HepG2 (cell line): ENCODE measurements at regions of chr2 and their contacts with region 1.

Region 1: GRCh38 chr2:28392297-28393113 is at the start of gene FOSL2:
- DNase-seq: peak; percentile 100
- ATAC-seq: peak; percentile 85
- H3K4me3 ChIP-seq: peak within 1 kb of the TSS; percentile 91 to 95 (median 93)
- H3K27ac ChIP-seq: peak within 1 kb of the TSS; percentile 88
- H3K4me1 ChIP-seq: peaks cover 45% of the 10 kb centered on the region
- H3K27me3 ChIP-seq: peaks cover 1 to 20% of the 10 kb centered on the region in 2 experiments; a peak in 3 of 5 replicates
- CTCF ChIP-seq: peak; percentile 36
- EP300 ChIP-seq: peak; percentile 46 to 55; a peak in 2 of 4 replicates
- POLR2A ChIP-seq: peak in 1 of 2 experiments; percentile 88; a peak in 2 of 4 replicates
- RAD21 ChIP-seq: peak; percentile 53
- total RNA-seq, gene FOSL2: 2.3 and 3.4 TPM in 2 replicates

Region 2: GRCh38 chr2:27211829-27212627 is 1180.5 kb before region 1 on chr2 and contains the starts of genes ATRAID and SLC5A6:
- CTCF ChIA-PET with region 1: no interaction called
- POLR2A ChIA-PET with region 1: no interaction called
- in situ Hi-C with region 1: no loop called
- intact Hi-C with region 1: no loop called
- DNase-seq: peak; percentile 82
- ATAC-seq: peak; percentile 91
- H3K4me3 ChIP-seq: peak within 1 kb of the TSS; percentile 87 to 93 (median 89)
- H3K27ac ChIP-seq: peak within 1 kb of the TSS; percentile 97
- H3K4me1 ChIP-seq: peaks cover 67% of the 10 kb centered on the region
- H3K27me3 ChIP-seq: no peaks in the 10 kb centered on the region; a peak in 1 of 5 replicates
- CTCF ChIP-seq: no peak; the same call in 1 of the 2 replicates
- EP300 ChIP-seq: peak in 1 of 2 experiments; percentile 11; a peak in 1 of 4 replicates
- POLR2A ChIP-seq: peak; percentile 95 to 98
- RAD21 ChIP-seq: peak; percentile 71
- total RNA-seq, gene ATRAID: 130 and 207 TPM in 2 replicates
- total RNA-seq, gene SLC5A6: 73.9 and 135 TPM in 2 replicates

Region 3: DNA sequence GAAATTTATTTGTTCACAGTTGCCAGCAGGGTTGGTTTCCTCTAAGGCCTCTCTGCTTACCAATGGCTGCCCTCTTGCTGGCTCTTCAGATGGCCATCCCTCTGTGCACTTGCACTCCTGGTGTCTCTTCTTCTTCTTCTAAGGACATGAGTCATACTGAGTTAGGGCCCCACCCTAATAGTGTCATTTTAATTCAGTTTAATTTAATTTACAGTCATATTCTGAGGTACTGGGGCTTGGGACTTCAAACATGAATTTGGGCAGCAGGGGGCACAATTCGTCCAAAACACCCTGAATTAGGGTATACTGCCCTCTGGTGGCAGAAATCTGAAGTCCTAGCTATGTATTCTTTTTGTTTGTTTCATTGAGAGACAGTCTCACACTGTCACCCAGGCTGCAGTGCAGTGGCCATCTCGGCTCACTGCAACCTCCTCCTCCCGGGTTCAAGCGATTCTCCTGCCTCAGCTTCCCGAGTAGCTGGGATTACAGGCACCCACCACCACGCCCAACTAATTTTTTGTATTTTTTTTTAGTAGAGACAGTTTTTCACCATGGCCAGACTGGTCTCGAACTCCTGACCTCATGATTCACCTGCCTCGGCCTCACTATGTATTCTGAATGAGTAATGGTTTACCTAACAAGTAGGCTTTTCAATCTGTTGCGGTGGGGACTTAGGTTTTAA is 709.0 kb before region 1 on chr2:
- CTCF ChIA-PET with region 1: interaction called, 13 read pairs
- POLR2A ChIA-PET with region 1: no interaction called
- in situ Hi-C with region 1: no loop called
- intact Hi-C with region 1: no loop called
- DNase-seq: peak; percentile 97
- ATAC-seq: peak; percentile 96
- H3K4me3 ChIP-seq: no peak overlapping the region
- H3K27ac ChIP-seq: peak overlapping the region; percentile 7
- H3K4me1 ChIP-seq: peaks cover 11% of the 10 kb centered on the region
- H3K27me3 ChIP-seq: no peaks in the 10 kb centered on the region
- CTCF ChIP-seq: peak; percentile 97
- EP300 ChIP-seq: 0 out of 4 replicates have a peak, but pooled peaks of 1 of the 2 experiments have one; percentile 14
- POLR2A ChIP-seq: no peak
- RAD21 ChIP-seq: peak; percentile 82

Region 4: GRCh38 chr2:27723372-27724144 is 668.9 kb before region 1 on chr2:
- CTCF ChIA-PET with region 1: no interaction called
- POLR2A ChIA-PET with region 1: interaction called, 7 read pairs
- in situ Hi-C with region 1: no loop called
- intact Hi-C with region 1: loop called (anchors 1 kb)
- DNase-seq: peak; percentile 75
- ATAC-seq: peak; percentile 79
- H3K4me3 ChIP-seq: peak overlapping the region; percentile 22 to 69 (median 33); a peak in 4 of 6 replicates
- H3K27ac ChIP-seq: no peak overlapping the region
- H3K4me1 ChIP-seq: peaks cover 58% of the 10 kb centered on the region
- H3K27me3 ChIP-seq: no peaks in the 10 kb centered on the region
- CTCF ChIP-seq: peak; percentile 94
- EP300 ChIP-seq: no peak
- POLR2A ChIP-seq: no peak
- RAD21 ChIP-seq: peak; percentile 85

Region 5: DNA sequence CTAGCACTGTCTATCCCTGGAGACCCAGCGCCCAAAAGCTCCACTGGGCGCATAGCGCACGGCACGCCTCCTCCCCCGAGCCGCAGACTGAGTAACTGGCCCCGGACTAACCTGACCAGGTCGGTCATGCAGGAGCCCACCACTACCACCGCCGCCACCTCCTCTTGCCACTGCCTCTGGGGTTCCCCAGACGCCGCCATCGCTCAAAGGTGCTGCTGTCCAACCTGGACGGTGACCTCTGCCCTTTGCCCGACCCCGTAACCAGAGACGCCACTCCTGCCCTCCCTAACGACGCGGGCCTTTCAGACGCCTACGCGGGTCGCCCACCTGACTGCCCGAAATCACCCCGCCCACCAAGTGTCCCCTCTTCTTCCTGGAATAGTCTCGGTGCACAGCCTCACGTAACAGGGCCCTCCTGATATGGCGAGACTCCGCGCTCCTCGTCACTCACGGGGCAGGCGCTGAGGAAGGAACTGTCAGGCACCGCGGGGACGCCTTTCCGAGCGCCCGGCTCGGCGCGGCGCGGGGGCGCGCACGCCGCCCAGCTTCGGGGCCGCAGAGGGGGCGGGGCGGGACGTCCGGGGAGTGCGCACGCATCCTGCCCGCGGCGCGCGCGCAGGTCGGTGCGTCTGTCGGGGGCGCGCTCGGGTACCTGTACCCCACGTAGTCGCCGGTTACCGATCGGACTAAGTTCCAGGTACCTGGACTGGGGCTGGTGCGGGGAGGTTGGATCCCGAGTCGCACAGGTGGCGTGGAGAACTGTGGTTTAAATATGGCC is 502.2 kb before region 1 on chr2 and contains the starts of genes BABAM2 and RBKS:
- CTCF ChIA-PET with region 1: no interaction called
- POLR2A ChIA-PET with region 1: interaction called, 9 read pairs
- in situ Hi-C with region 1: no loop called
- intact Hi-C with region 1: loop called (anchors 1 kb)
- DNase-seq: peak; percentile 89
- ATAC-seq: peak; percentile 89
- H3K4me3 ChIP-seq: peak within 1 kb of the TSS; percentile 92 to 93 (median 93)
- H3K27ac ChIP-seq: peak within 1 kb of the TSS; percentile 93
- H3K4me1 ChIP-seq: peaks cover 34% of the 10 kb centered on the region
- H3K27me3 ChIP-seq: no peaks in the 10 kb centered on the region; a peak in 1 of 5 replicates
- CTCF ChIP-seq: peak; percentile 17; the same call in 1 of the 2 replicates
- EP300 ChIP-seq: peak in 1 of 2 experiments; percentile 70; a peak in 1 of 4 replicates
- POLR2A ChIP-seq: peak; percentile 71 to 77
- RAD21 ChIP-seq: peak; percentile 60
- total RNA-seq, gene BABAM2: 24.9 and 34.8 TPM in 2 replicates
- total RNA-seq, gene RBKS: 7.7 and 11.7 TPM in 2 replicates

Region 6: GRCh38 chr2:28247290-28247689 is 145.2 kb before region 1 on chr2:
- CTCF ChIA-PET with region 1: no interaction called
- POLR2A ChIA-PET with region 1: no interaction called
- in situ Hi-C with region 1: no loop called
- intact Hi-C with region 1: no loop called
- DNase-seq: no peak
- ATAC-seq: no peak
- H3K4me3 ChIP-seq: no peak overlapping the region
- H3K27ac ChIP-seq: no peak overlapping the region
- H3K4me1 ChIP-seq: no peaks in the 10 kb centered on the region
- H3K27me3 ChIP-seq: no peaks in the 10 kb centered on the region
- CTCF ChIP-seq: no peak
- EP300 ChIP-seq: no peak
- POLR2A ChIP-seq: no peak
- RAD21 ChIP-seq: no peak

Region 7: DNA sequence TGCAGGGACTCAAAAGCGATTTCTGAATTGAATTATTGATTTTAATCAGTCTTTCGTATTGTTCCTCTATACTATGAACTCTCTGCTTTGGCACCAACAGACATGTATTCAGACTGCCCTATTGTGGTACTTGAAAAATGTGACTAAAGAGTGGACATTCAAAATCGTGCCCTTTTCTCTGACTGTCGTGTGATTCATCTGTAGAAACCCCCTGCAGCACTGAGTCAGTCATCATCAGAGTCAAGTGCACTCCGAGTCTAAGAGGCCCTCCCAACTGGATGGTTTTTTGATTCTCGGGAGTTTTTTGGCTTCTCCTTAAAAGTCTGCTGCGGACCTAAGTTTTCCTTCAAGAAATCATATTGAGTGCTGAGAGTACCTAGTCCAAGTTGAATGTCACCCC is 96.3 kb before region 1 on chr2:
- CTCF ChIA-PET with region 1: no interaction called
- POLR2A ChIA-PET with region 1: no interaction called
- in situ Hi-C with region 1: no loop called
- intact Hi-C with region 1: no loop called
- DNase-seq: no peak
- ATAC-seq: no peak
- H3K4me3 ChIP-seq: no peak overlapping the region
- H3K27ac ChIP-seq: no peak overlapping the region
- H3K4me1 ChIP-seq: no peaks in the 10 kb centered on the region
- H3K27me3 ChIP-seq: no peaks in the 10 kb centered on the region
- CTCF ChIP-seq: no peak
- EP300 ChIP-seq: no peak
- POLR2A ChIP-seq: no peak
- RAD21 ChIP-seq: no peak

Region 8: DNA sequence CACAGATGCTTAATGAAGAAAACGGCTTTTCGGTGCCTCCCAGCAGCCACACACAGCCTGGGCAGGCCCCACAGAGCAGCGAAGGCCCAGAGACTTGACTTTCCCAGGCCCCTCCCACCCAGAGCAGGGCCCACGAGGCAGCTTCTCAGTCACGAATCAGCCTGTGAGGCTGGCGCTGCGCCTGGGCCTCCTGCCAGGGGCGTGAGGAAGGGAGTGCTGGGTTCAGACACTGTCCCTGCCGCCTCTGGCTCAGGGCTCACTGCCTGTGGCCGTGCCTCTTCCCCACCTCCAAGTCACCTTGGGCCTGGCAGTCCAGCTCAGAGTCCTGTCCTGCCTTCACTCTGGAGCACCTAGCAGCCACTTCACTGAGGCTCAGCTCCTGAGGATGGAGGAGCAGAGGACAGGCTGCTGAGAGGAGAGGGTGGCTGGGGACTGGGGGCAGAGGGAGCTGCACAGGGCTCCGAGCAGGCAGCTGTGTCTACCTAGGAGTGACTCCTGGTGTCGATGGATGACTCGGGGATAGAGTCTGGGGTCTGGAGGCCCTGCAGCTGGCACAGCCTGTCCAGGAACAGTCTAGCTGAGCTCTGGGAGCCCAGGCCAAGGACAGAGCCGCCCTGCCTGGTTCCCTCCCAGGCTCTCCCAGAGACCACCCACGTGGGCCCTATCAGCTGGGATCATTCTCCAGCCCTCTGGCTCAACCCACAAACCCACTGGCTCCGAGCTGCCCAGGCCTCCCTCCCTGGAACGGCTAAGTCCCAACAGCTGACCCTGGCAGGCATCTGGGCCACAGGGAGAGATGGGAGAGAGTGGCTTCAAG is 36.2 kb before region 1 on chr2:
- CTCF ChIA-PET with region 1: no interaction called
- POLR2A ChIA-PET with region 1: interaction called, 4 read pairs
- in situ Hi-C with region 1: no loop called
- intact Hi-C with region 1: loop called (anchors 5 kb)
- DNase-seq: no peak
- ATAC-seq: peak; percentile 68
- H3K4me3 ChIP-seq: peak overlapping the region in 2 of 3 experiments; percentile 6 to 63; a peak in 2 of 6 replicates
- H3K27ac ChIP-seq: no peak overlapping the region
- H3K4me1 ChIP-seq: peaks cover 50% of the 10 kb centered on the region
- H3K27me3 ChIP-seq: peaks cover 0 to 19% of the 10 kb centered on the region in 2 experiments; a peak in 4 of 5 replicates
- CTCF ChIP-seq: 0 out of 2 replicates have a peak, but pooled peaks have one; percentile 4
- EP300 ChIP-seq: no peak
- POLR2A ChIP-seq: no peak
- RAD21 ChIP-seq: no peak

Region 9: GRCh38 chr2:28683100-28683706 is 290.7 kb after region 1 on chr2:
- CTCF ChIA-PET with region 1: no interaction called
- POLR2A ChIA-PET with region 1: no interaction called
- in situ Hi-C with region 1: no loop called
- intact Hi-C with region 1: no loop called
- DNase-seq: peak; percentile 42
- ATAC-seq: peak; percentile 64
- H3K4me3 ChIP-seq: no peak overlapping the region
- H3K27ac ChIP-seq: no peak overlapping the region
- H3K4me1 ChIP-seq: peaks cover 15% of the 10 kb centered on the region
- H3K27me3 ChIP-seq: peaks cover 0 to 31% of the 10 kb centered on the region in 2 experiments; a peak in 3 of 5 replicates
- CTCF ChIP-seq: no peak
- EP300 ChIP-seq: no peak
- POLR2A ChIP-seq: no peak
- RAD21 ChIP-seq: no peak